Heart left ventricle (tissue), 16 donors: ENCODE measurements at regions of chr18 and their contacts with region 1.

Region 1: GRCh38 chr18:46677611-46678010 is 20.6 kb upstream of the LOXHD1 start:
- DNase-seq: no peak
- ATAC-seq: peak in 3 of 4 donors; percentile 52 to 75 (median 70)
- H3K4me3 ChIP-seq: no peak overlapping the region
- H3K27ac ChIP-seq: no peak overlapping the region
- H3K4me1 ChIP-seq: peaks cover 0 to 11% (median 0%) of the 10 kb centered on the region in 12 donors
- H3K27me3 ChIP-seq: no peaks in the 10 kb centered on the region
- CTCF ChIP-seq: peak in 11 of 12 donors; percentile 12 to 53 (median 29)
- POLR2A ChIP-seq: no peak

Region 2: DNA sequence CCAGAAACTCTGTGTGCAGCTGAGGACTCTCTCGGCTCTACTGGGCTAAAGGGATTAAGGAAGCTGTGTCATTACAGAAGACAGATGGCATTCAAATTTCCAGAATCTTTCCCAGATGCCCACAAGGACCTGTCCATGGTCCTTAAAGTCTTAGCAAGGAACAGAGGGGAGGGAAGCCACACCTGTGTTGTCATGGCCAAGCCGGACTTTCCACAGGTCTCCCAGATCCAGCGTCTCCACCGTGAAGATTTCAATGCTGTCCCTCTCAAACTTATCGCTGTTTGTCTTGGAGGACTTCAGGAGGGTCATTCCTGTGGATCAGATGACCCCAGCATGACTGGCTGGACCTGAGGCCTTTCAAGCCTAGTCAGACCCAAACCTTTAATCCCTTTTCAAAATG is 135.1 kb before region 1 on chr18:
- intact Hi-C with region 1: no loop called
- DNase-seq: no peak
- ATAC-seq: no peak
- H3K4me3 ChIP-seq: no peak overlapping the region
- H3K27ac ChIP-seq: no peak overlapping the region
- H3K4me1 ChIP-seq: no peaks in the 10 kb centered on the region
- H3K27me3 ChIP-seq: no peaks in the 10 kb centered on the region
- CTCF ChIP-seq: no peak
- POLR2A ChIP-seq: no peak

Region 3: DNA sequence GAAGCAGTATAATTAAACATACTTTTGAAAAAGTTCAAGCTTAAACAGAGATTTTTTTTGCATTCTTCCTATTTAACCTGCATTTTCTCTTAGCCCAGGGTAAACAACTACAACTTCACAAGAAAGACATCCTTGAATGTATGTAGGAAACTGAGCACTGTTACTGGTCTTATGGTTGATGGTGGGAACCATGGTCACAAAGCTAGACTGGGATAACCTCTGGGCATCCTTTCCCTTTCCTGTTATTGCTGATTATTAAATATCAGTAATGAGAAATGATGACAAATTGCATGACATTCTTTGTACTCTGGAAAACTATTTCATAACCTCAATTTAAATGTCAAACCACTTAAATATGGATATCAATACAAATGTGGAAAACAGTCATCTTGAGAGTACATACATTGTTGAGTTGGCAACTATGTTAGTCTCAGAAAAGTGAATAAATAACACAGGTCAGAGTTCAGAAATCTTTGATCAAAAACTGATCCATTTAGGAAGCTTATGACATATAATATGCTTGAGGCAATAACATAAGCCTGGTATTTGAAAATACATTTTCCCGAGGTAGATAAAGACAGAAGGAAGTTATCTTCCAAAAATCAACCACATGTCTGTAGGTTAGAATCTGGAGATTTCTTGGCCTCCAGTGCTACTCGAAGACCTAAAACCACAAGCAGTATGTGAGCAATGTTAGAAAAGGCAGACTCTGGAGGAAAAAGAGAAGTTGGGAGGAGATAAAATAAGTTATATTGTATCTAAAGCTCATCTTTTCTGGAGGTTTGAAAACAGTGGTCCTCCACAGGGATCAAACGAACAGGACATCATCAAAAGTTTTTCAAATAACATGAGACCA is 144.5 kb after region 1 on chr18:
- intact Hi-C with region 1: loop called in 2 of 10 experiments (anchors 5 to 10 kb)
- DNase-seq: no peak
- ATAC-seq: no peak
- H3K4me3 ChIP-seq: no peak overlapping the region
- H3K27ac ChIP-seq: no peak overlapping the region
- H3K4me1 ChIP-seq: no peaks in the 10 kb centered on the region
- H3K27me3 ChIP-seq: no peaks in the 10 kb centered on the region
- CTCF ChIP-seq: no peak
- POLR2A ChIP-seq: no peak